ENCODE measurements at regions of chr7 and their contacts with region 1.

Region 1: GRCh38 chr7:113710310-113711106 is 208.3 kb downstream of the PPP1R3A start:
- DNase-seq: peak in 15 of 35 experiments; percentile 0 to 76 (median 4)
- ATAC-seq: peak in 3 of 4 experiments; percentile 51 to 67 (median 65)
- H3K4me3 ChIP-seq: no peak overlapping the region
- H3K4me3 Mint-ChIP-seq: no peak overlapping the region
- H3K27ac ChIP-seq: no peak overlapping the region
- H3K27ac Mint-ChIP-seq: no peak overlapping the region
- H3K4me1 ChIP-seq: no peaks in the 10 kb centered on the region
- H3K4me1 Mint-ChIP-seq: no peaks in the 10 kb centered on the region
- H3K27me3 ChIP-seq: no peaks in the 10 kb centered on the region
- H3K27me3 Mint-ChIP-seq: peaks cover 2 to 11% of the 10 kb centered on the region in 2 donors

Region 2: GRCh38 chr7:112538726-112539255 is 1171.7 kb before region 1 on chr7:
- CTCF ChIA-PET with region 1: interaction called in 1 of 2 experiments, 13 read pairs
- POLR2A ChIA-PET with region 1: no interaction called
- DNase-seq: no peak
- ATAC-seq: no peak
- H3K4me3 ChIP-seq: no peak overlapping the region
- H3K4me3 Mint-ChIP-seq: no peak overlapping the region
- H3K27ac ChIP-seq: no peak overlapping the region
- H3K27ac Mint-ChIP-seq: no peak overlapping the region
- H3K4me1 ChIP-seq: no peaks in the 10 kb centered on the region
- H3K4me1 Mint-ChIP-seq: no peaks in the 10 kb centered on the region
- H3K27me3 ChIP-seq: no peaks in the 10 kb centered on the region
- H3K27me3 Mint-ChIP-seq: peaks cover 19 to 21% of the 10 kb centered on the region in 2 donors

Region 3: DNA sequence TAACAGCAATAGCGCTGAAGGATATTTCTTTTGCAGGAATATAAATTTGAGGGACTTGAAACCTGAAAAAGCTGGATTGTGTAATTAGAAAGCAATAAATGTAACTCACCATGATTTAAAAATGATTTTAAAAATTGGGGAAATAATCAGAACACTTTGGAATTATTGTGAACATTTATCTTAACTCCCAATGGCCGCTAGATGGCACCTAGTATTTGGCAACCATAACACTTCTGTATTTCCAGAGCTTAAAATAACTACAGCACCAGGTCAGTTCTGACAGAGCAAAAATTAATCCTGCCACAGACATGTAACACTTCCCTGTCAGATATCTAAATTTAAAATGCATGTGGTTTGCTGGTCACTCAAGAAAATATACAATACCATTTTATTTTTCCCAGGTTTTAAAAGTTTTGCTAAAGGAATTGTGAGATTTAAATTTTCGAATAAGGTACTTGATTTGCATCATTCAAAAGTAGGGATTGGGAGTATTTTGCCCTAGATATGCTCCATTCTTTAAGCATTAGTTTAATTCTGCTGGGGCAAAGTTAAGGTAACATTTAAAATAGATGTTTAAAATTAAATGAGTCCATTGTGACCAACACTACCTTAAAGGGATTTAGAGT is 63.8 kb after region 1 on chr7:
- CTCF ChIA-PET with region 1: no interaction called
- POLR2A ChIA-PET with region 1: no interaction called
- DNase-seq: no peak
- ATAC-seq: no peak
- H3K4me3 ChIP-seq: no peak overlapping the region
- H3K4me3 Mint-ChIP-seq: no peak overlapping the region
- H3K27ac ChIP-seq: no peak overlapping the region
- H3K27ac Mint-ChIP-seq: no peak overlapping the region
- H3K4me1 ChIP-seq: no peaks in the 10 kb centered on the region
- H3K4me1 Mint-ChIP-seq: no peaks in the 10 kb centered on the region
- H3K27me3 ChIP-seq: no peaks in the 10 kb centered on the region
- H3K27me3 Mint-ChIP-seq: no peaks in the 10 kb centered on the region

Region 4: DNA sequence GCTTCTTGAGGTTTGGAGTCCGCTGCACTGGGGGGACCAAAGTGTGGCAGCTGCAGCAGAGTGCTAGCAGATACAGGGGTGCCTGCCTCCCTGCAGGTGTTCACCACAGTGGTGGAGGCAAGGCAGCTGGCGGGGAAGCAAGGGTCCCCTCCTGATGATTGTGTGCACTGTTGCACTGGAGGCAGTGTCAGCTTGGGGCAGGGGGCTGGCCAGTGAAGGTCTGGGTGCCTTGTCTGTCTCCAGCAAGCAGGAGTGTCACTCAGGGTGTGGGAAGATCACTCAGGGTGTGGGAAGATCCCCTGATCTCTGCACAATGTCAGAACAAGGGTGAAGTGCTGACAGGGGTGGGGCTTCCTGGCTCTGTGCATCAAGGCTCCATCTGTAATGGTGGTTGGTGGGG is 244.6 kb after region 1 on chr7:
- CTCF ChIA-PET with region 1: no interaction called
- POLR2A ChIA-PET with region 1: no interaction called
- DNase-seq: no peak
- ATAC-seq: no peak
- H3K4me3 ChIP-seq: no peak overlapping the region
- H3K4me3 Mint-ChIP-seq: no peak overlapping the region
- H3K27ac ChIP-seq: no peak overlapping the region
- H3K27ac Mint-ChIP-seq: no peak overlapping the region
- H3K4me1 ChIP-seq: no peaks in the 10 kb centered on the region
- H3K4me1 Mint-ChIP-seq: no peaks in the 10 kb centered on the region
- H3K27me3 ChIP-seq: peaks cover 0 to 4% of the 10 kb centered on the region in 2 experiments
- H3K27me3 Mint-ChIP-seq: no peaks in the 10 kb centered on the region

Region 5: GRCh38 chr7:114229246-114229645 is 518.7 kb after region 1 on chr7:
- CTCF ChIA-PET with region 1: interaction called in 1 of 2 experiments, 14 read pairs
- POLR2A ChIA-PET with region 1: no interaction called
- DNase-seq: no peak
- ATAC-seq: no peak
- H3K4me3 ChIP-seq: no peak overlapping the region
- H3K4me3 Mint-ChIP-seq: no peak overlapping the region
- H3K27ac ChIP-seq: no peak overlapping the region
- H3K27ac Mint-ChIP-seq: no peak overlapping the region
- H3K4me1 ChIP-seq: no peaks in the 10 kb centered on the region
- H3K4me1 Mint-ChIP-seq: no peaks in the 10 kb centered on the region
- H3K27me3 ChIP-seq: peaks cover 0 to 2% of the 10 kb centered on the region in 2 experiments
- H3K27me3 Mint-ChIP-seq: no peaks in the 10 kb centered on the region

Measured in T-cell (primary cell).